PC-3 (cell line): ENCODE measurements at regions of chr17 and their contacts with region 1.

Region 1: GRCh38 chr17:57946798-57947358 is 8.3 kb downstream of the CUEDC1 start:
- DNase-seq: peak; percentile 75
- ATAC-seq: peak; percentile 18
- H3K4me3 ChIP-seq: peak overlapping the region; percentile 55
- H3K27ac ChIP-seq: peak overlapping the region; percentile 98
- H3K4me1 ChIP-seq: peaks cover 74% of the 10 kb centered on the region
- H3K27me3 ChIP-seq: no peaks in the 10 kb centered on the region
- CTCF ChIP-seq: no peak

Region 2: DNA sequence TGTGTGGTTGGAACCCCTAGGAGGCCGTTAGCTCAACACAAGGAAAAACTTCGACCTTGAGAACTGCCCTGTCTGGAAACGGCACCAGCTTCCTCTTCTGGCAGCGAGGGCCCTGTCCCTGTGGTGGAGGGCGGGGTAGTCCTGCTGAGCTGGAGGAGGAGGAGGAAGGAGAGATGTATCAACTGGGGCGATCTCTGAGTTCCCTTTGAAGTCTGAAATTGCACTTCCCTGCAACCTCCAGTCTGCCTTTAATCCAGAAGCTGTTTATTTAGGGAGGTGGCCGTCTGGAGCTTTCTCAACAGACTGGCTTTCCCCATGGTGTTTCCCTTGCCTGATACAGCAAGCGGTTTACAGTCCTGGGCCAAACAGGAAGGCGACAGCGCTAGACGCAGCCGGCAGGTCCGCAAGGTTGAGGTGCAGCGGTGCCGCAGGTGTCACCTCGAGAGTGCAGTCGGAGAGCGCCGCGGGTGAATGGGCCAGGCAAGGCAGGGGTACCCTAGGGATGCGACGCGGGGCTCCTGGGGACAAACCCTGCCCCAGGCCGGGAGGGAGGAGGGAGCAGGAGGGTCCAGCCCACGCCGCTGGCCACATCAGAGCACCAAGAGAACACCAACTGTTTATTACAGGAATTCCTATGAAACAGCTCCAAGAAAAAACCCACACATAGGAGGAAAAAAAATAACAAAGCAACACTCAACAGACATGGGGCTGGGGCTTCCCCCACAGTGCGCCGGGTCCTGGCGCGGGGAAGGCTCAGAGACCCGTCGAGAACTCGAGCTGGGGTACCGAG is 85.7 kb before region 1 on chr17:
- CTCF ChIA-PET with region 1: interaction called, 15 read pairs
- POLR2A ChIA-PET with region 1: interaction called, 4 read pairs
- intact Hi-C with region 1: no loop called
- DNase-seq: peak; percentile 50
- ATAC-seq: peak; percentile 30
- H3K4me3 ChIP-seq: peak overlapping the region; percentile 63
- H3K27ac ChIP-seq: peak overlapping the region; percentile 8
- H3K4me1 ChIP-seq: peaks cover 27% of the 10 kb centered on the region
- H3K27me3 ChIP-seq: no peaks in the 10 kb centered on the region
- CTCF ChIP-seq: no peak

Region 3: GRCh38 chr17:57902800-57903759 is 43.8 kb before region 1 on chr17:
- CTCF ChIA-PET with region 1: interaction called, 5 read pairs
- POLR2A ChIA-PET with region 1: interaction called, 4 read pairs
- intact Hi-C with region 1: loop called (anchors 1 kb)
- DNase-seq: peak; percentile 98
- ATAC-seq: peak; percentile 82
- H3K4me3 ChIP-seq: no peak overlapping the region
- H3K27ac ChIP-seq: peak overlapping the region; percentile 96
- H3K4me1 ChIP-seq: peaks cover 64% of the 10 kb centered on the region
- H3K27me3 ChIP-seq: no peaks in the 10 kb centered on the region
- CTCF ChIP-seq: no peak

Region 4: DNA sequence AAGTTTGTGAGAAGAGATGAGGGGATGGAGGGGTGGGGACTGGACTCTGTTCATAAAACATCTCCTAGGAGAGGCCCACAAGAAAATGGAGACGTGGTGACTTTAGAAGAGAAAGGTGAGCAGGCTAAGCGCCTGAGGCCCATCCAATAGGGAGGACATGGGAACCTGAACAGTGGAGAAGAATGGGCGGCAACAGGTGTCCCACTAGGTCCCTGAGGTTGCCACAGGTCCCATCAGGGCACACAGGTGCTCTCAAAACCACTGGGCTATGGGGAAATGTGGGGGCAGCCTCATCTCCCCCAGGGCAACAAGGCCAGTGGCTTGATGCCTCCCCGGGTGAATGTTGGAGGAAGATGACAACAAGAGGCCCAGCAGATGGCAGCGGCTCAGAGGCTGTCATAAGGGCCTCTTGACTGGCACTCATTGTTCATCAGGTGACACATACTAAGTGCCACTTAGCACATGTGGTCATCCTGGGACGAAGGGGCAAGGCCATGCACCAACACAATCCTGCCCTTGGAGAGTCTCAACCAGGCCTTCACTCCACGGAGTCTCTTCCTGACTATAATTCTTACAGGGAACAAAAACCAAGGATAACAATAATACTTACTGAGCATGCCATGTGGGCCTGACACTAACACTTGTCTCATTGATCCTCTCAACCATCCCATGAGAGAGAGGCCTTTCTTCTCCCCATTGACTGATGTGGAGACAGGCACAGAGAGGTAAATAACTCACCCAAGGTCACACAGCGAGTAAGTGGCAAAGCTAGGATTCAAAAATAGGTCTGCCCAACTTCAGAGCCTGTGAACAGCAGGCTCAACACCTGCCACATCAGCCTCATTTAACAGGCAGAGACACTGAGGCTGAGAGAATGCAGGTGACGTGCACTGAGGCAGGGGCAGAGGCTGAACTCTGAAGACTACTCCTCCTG is 29.7 kb before region 1 on chr17:
- CTCF ChIA-PET with region 1: interaction called, 6 read pairs
- POLR2A ChIA-PET with region 1: no interaction called
- intact Hi-C with region 1: loop called (anchors 2 kb)
- DNase-seq: peak; percentile 39
- ATAC-seq: peak; percentile 7; the same call in 1 of the 2 replicates
- H3K4me3 ChIP-seq: no peak overlapping the region
- H3K27ac ChIP-seq: peak overlapping the region; percentile 86
- H3K4me1 ChIP-seq: peaks cover 52% of the 10 kb centered on the region
- H3K27me3 ChIP-seq: no peaks in the 10 kb centered on the region
- CTCF ChIP-seq: peak; percentile 55; the same call in 1 of the 2 replicates

Region 5: DNA sequence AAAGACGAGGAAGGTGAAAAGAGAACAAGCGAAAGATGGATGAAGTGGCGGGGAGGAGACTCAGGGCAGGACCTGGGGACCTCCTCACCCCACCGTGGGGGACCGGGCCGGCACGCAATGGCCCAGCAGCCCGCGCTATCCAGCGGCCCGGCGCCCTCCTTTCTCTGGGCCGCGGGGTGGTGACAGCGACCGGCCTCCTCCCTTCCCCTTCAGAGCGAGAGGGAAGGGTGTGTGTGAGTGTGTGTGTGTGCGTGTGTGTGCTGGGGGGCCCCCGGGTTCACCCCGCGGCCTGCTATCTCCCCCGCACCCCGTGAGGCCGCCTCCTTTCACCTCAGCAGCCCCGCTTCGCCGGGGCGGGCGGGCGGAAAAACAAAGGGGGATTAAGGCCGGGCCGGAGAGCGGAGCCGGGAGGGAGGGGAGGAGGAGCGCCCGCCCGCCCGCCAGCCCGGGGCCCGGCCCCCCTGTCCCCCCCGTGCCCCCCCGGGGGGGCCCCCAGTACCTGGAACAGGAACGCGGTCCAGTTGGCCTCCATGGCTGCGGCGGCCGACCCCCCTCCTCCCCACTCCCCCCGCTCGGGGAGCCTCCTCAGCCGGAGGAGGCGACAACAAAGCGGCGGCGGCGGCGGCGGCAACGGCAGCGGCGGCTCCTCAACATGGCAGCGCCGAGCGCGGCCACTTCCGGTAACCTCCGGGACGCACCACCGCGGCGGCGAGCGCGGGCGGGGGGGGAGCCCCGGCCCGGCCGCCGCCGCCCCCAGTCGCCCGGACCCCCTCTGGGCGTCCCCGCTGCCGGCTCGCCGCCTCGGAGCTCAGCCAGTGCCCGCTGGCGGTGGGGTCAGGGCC is 40.9 kb after region 1 on chr17 and contains the start of gene VEZF1:
- CTCF ChIA-PET with region 1: interaction called, 25 read pairs
- POLR2A ChIA-PET with region 1: interaction called, 12 read pairs
- intact Hi-C with region 1: loop called (anchors 2 kb)
- DNase-seq: peak; percentile 79
- ATAC-seq: peak; percentile 42
- H3K4me3 ChIP-seq: peak within 1 kb of the TSS; percentile 80
- H3K27ac ChIP-seq: peak within 1 kb of the TSS; percentile 87
- H3K4me1 ChIP-seq: peaks cover 39% of the 10 kb centered on the region
- H3K27me3 ChIP-seq: no peaks in the 10 kb centered on the region
- CTCF ChIP-seq: no peak
- total RNA-seq, gene VEZF1: 70.1 and 78.1 TPM in 2 replicates

Region 6: GRCh38 chr17:57995076-57995956 is 48.4 kb after region 1 on chr17:
- CTCF ChIA-PET with region 1: interaction called, 6 read pairs
- POLR2A ChIA-PET with region 1: interaction called, 13 read pairs
- intact Hi-C with region 1: loop called (anchors 2 kb)
- DNase-seq: peak; percentile 87
- ATAC-seq: peak; percentile 82
- H3K4me3 ChIP-seq: no peak overlapping the region
- H3K27ac ChIP-seq: no peak overlapping the region
- H3K4me1 ChIP-seq: no peaks in the 10 kb centered on the region
- H3K27me3 ChIP-seq: no peaks in the 10 kb centered on the region
- CTCF ChIP-seq: peak; percentile 90

Region 7: DNA sequence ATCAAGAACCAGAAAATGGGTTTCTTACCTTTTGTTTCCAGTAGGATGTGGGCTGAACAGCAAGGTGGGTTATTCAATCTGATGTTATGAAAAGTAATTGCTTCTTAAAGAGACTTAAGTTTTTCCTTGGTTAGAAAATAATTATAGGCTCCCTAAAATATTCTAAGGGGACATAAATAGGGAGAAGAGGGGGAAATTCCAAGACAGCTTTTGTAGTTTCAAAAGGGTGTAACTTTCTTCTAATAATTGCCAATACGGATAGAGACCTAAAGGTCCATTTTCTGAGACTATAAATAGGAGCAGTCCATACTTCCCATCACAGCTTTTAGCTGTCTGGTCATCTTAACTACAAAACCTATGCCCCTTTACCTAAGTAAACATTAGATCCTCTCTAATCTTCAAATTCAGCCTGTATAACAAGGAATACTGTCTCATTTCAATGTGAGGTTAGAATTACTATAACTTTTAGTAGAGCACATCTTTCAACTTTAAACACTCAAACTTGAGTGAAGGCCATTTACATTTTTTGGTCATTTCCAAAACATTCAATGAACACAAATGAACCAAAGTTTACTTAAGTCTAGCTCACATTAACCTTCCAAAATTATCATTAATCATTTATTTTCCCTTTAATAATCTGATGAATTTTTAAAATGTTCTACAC is 54.7 kb after region 1 on chr17:
- CTCF ChIA-PET with region 1: interaction called, 12 read pairs
- POLR2A ChIA-PET with region 1: interaction called, 13 read pairs
- intact Hi-C with region 1: no loop called
- DNase-seq: no peak
- ATAC-seq: no peak
- H3K4me3 ChIP-seq: 0 out of 2 replicates have a peak overlapping the region, but pooled peaks have one; percentile 96
- H3K27ac ChIP-seq: no peak overlapping the region
- H3K4me1 ChIP-seq: peaks cover 30% of the 10 kb centered on the region
- H3K27me3 ChIP-seq: no peaks in the 10 kb centered on the region
- CTCF ChIP-seq: no peak